ENCODE measurements at regions of chr11 and their contacts with region 1.

Region 1: DNA sequence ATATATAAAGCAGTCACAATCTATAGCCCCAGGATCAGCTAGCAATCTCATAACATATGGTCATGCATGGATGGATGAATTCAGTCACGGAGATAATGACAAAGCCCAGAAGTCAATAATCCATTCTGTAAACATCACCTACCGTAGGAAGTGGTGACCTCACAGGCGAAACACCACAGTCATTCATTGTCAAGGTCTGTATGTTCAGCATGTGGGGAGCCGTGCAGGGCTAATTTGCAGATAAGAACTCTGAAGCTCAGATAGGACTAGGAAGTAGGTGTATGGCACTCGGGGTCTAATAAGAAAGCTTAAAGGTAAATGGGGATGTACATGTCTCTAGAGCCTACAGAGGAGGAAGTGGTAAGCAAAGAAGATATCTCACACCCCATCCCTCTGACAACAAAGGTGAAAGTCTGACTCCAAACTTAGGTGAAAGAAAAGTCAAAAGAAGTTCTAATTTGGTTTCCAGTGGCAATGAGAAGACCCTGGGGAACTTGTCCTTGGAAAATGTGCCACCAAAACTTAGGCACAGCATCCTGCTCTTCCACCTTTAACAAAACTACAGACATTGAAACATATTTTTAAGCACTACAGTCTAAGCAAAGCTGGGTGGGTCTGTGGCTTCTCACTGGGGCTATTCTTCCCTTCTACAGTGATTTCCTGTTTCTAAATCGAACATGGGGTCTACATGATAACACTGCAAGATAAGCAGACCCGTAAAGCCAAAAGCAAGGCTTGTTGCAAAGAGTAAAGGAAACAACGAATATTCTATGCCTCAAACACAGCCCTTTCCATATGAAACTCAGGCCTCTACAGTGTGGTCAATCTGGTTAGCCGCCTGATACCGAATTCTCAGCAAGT is 5.2 kb downstream of the CRTAM start:
- DNase-seq: peak; percentile 31 to 92 (median 61)
- ATAC-seq: peak; percentile 82
- H3K4me3 ChIP-seq: peak overlapping the region; percentile 14 to 38
- H3K4me3 Mint-ChIP-seq: peak overlapping the region; percentile 59
- H3K27ac ChIP-seq: peak overlapping the region; percentile 56 to 84
- H3K27ac Mint-ChIP-seq: peak overlapping the region; percentile 94
- H3K4me1 ChIP-seq: peaks cover 75% of the 10 kb centered on the region
- H3K4me1 Mint-ChIP-seq: peaks cover 86% of the 10 kb centered on the region
- H3K27me3 ChIP-seq: no peaks in the 10 kb centered on the region
- H3K27me3 Mint-ChIP-seq: no peaks in the 10 kb centered on the region
- CTCF ChIP-seq: no peak

Region 2: DNA sequence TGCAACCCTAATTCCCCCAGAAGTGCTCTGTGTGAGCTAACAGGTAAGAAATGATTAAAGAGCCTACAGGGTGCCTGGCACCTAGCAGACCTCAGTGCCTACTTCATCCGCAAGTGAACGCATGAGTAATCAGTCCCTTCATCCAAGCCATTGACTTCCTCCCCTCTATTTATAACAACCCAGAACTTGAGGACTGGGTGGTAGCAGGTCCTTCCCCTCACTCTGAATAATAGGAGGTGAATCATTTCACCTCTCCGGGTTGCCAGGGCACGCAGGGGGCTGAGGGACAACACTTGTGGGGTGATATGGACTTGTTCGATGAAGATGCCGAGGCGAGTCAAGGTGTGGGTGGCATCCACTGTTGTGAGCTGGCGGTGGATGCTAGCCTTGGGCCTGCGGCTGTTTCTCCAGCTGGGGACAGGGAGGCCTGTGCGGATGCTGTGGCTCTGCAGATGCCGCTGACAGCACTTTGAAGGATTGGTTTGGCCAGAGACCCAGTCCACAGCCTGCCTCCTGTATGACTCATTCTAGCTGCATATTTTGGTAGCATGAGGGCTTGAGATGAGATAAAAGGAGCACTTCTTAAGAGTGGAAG is 1379.1 kb before region 1 on chr11:
- CTCF ChIA-PET with region 1: no interaction called
- POLR2A ChIA-PET with region 1: no interaction called
- intact Hi-C with region 1: loop called in 1 of 2 experiments (anchors 10 kb)
- DNase-seq: peak in 8 of 9 experiments; percentile 60 to 85 (median 80)
- ATAC-seq: peak; percentile 71
- H3K4me3 ChIP-seq: peak overlapping the region; percentile 4 to 5
- H3K4me3 Mint-ChIP-seq: peak overlapping the region; percentile 59
- H3K27ac ChIP-seq: peak overlapping the region; percentile 35 to 68
- H3K27ac Mint-ChIP-seq: peak overlapping the region; percentile 97
- H3K4me1 ChIP-seq: peaks cover 99% of the 10 kb centered on the region
- H3K4me1 Mint-ChIP-seq: peaks cover 95% of the 10 kb centered on the region
- H3K27me3 ChIP-seq: no peaks in the 10 kb centered on the region
- H3K27me3 Mint-ChIP-seq: no peaks in the 10 kb centered on the region
- CTCF ChIP-seq: no peak

Region 3: DNA sequence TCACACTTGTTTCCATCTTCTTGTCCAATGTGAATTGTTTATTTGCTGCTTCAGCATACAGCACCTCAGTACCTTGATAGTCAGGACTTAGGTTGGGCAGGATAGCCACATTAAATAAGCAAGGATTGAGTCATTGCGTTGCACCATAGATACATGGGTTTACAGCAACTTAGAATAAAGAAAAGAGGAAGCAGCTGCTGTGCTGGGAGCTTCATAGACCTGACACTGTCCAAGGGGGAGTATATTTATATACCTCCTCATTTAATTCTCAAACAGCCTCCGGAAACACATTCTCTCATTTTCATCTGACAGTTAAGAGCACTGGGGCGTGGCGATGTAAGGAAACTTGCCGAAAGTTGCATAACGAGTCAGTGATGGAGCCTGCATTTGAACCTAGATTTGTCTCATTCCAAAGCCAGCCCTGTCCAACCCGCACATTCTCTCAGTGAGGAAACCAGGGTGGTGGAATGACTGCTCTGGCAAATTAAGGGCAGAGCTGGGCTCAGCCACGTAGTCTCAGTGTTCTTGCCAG is 145.8 kb before region 1 on chr11:
- CTCF ChIA-PET with region 1: no interaction called
- POLR2A ChIA-PET with region 1: no interaction called
- intact Hi-C with region 1: loop called in 1 of 2 experiments (anchors 5 kb)
- DNase-seq: peak in 7 of 9 experiments; percentile 14 to 72 (median 60)
- ATAC-seq: peak; percentile 81
- H3K4me3 ChIP-seq: peak overlapping the region; percentile 4 to 25
- H3K4me3 Mint-ChIP-seq: peak overlapping the region; percentile 66
- H3K27ac ChIP-seq: peak overlapping the region; percentile 57 to 64
- H3K27ac Mint-ChIP-seq: peak overlapping the region; percentile 94
- H3K4me1 ChIP-seq: peaks cover 80% of the 10 kb centered on the region
- H3K4me1 Mint-ChIP-seq: peaks cover 91% of the 10 kb centered on the region
- H3K27me3 ChIP-seq: no peaks in the 10 kb centered on the region
- H3K27me3 Mint-ChIP-seq: no peaks in the 10 kb centered on the region
- CTCF ChIP-seq: no peak

Region 4: GRCh38 chr11:122814401-122814800 is 29.1 kb before region 1 on chr11:
- CTCF ChIA-PET with region 1: interaction called, 16 read pairs
- POLR2A ChIA-PET with region 1: interaction called, 3 read pairs
- intact Hi-C with region 1: no loop called
- DNase-seq: peak in 3 of 9 experiments; percentile 10 to 57 (median 44)
- ATAC-seq: no peak
- H3K4me3 ChIP-seq: no peak overlapping the region
- H3K4me3 Mint-ChIP-seq: no peak overlapping the region
- H3K27ac ChIP-seq: no peak overlapping the region
- H3K27ac Mint-ChIP-seq: no peak overlapping the region
- H3K4me1 ChIP-seq: peaks cover 27% of the 10 kb centered on the region
- H3K4me1 Mint-ChIP-seq: peaks cover 49% of the 10 kb centered on the region
- H3K27me3 ChIP-seq: no peaks in the 10 kb centered on the region
- H3K27me3 Mint-ChIP-seq: no peaks in the 10 kb centered on the region
- CTCF ChIP-seq: peak; percentile 25

Region 5: GRCh38 chr11:122822241-122822640 is 21.3 kb before region 1 on chr11:
- CTCF ChIA-PET with region 1: interaction called, 9 read pairs
- POLR2A ChIA-PET with region 1: interaction called, 17 read pairs
- intact Hi-C with region 1: no loop called
- DNase-seq: no peak
- ATAC-seq: no peak
- H3K4me3 ChIP-seq: no peak overlapping the region
- H3K4me3 Mint-ChIP-seq: no peak overlapping the region
- H3K27ac ChIP-seq: no peak overlapping the region
- H3K27ac Mint-ChIP-seq: no peak overlapping the region
- H3K4me1 ChIP-seq: peaks cover 11% of the 10 kb centered on the region
- H3K4me1 Mint-ChIP-seq: peaks cover 18% of the 10 kb centered on the region
- H3K27me3 ChIP-seq: no peaks in the 10 kb centered on the region
- H3K27me3 Mint-ChIP-seq: no peaks in the 10 kb centered on the region
- CTCF ChIP-seq: no peak

Region 6: DNA sequence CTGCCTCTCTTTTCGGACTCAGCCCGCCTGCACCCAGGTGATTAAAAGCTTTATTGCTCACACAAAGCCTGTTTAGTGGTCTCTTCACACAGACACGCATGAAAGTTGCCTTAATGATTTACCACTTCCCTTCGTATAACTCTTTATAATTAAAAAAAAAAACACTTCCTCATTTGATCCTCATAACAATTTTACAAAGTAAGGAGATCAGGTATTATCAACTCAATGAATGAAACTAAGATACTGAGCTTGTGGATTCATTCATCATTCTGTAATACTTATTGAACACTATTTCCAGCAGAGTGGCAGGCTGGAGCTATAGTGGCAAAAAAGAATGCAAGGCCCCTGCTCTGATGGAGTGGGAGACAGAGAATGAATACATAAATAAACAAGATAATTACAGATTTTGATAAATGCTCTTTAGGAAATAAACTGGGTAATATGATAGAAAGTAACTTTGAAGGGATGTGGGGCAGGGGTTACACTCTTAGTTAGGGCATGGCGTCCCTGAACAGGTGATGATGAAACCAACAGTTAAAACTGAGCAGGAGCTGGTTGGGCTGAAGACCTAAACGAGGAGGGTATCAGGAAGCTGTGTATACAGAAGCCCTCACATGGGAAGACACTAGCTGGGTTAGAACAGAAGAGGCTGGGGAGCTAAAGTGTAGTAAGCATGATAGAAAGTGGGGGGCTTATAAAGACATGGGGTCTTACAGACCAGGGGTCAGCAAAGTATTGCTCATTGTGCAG is 10.6 kb before region 1 on chr11:
- CTCF ChIA-PET with region 1: interaction called, 22 read pairs
- POLR2A ChIA-PET with region 1: interaction called, 25 read pairs
- intact Hi-C with region 1: no loop called
- DNase-seq: peak in 1 of 9 experiments; percentile 44
- ATAC-seq: peak; percentile 46
- H3K4me3 ChIP-seq: no peak overlapping the region
- H3K4me3 Mint-ChIP-seq: peak overlapping the region; percentile 12
- H3K27ac ChIP-seq: peak overlapping the region; percentile 7 to 42
- H3K27ac Mint-ChIP-seq: peak overlapping the region; percentile 70
- H3K4me1 ChIP-seq: peaks cover 15% of the 10 kb centered on the region
- H3K4me1 Mint-ChIP-seq: peaks cover 43% of the 10 kb centered on the region
- H3K27me3 ChIP-seq: no peaks in the 10 kb centered on the region
- H3K27me3 Mint-ChIP-seq: no peaks in the 10 kb centered on the region
- CTCF ChIP-seq: no peak

Region 7: GRCh38 chr11:122872051-122872450 is 28.5 kb after region 1 on chr11:
- CTCF ChIA-PET with region 1: no interaction called
- POLR2A ChIA-PET with region 1: no interaction called
- intact Hi-C with region 1: no loop called
- DNase-seq: no peak
- ATAC-seq: no peak
- H3K4me3 ChIP-seq: no peak overlapping the region
- H3K4me3 Mint-ChIP-seq: no peak overlapping the region
- H3K27ac ChIP-seq: no peak overlapping the region
- H3K27ac Mint-ChIP-seq: peak overlapping the region; percentile 79
- H3K4me1 ChIP-seq: no peaks in the 10 kb centered on the region
- H3K4me1 Mint-ChIP-seq: no peaks in the 10 kb centered on the region
- H3K27me3 ChIP-seq: no peaks in the 10 kb centered on the region
- H3K27me3 Mint-ChIP-seq: no peaks in the 10 kb centered on the region
- CTCF ChIP-seq: no peak

Region 8: DNA sequence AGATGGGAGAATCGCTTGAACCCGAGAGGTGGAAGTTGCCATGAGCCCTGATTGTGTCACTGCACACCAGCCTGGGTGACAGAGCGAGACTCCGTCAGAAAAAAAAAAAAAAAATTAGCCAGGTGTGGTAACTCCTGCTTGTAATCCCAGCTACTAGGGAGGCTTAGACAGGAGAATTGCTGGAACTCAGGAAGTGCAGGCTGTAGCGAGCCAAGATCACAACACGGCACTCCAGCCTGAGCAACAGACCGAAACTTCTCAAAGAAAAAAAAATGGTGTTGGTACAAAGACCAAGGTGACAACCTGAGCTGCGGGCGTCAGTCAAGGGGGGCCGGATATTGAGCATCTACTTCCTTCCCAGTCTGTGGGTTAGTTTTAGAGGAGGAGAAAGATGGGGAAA is 266.8 kb after region 1 on chr11:
- CTCF ChIA-PET with region 1: no interaction called
- POLR2A ChIA-PET with region 1: no interaction called
- intact Hi-C with region 1: no loop called
- DNase-seq: peak in 2 of 9 experiments; percentile 22 to 41
- ATAC-seq: no peak
- H3K4me3 ChIP-seq: no peak overlapping the region
- H3K4me3 Mint-ChIP-seq: peak overlapping the region; percentile 62
- H3K27ac ChIP-seq: no peak overlapping the region
- H3K27ac Mint-ChIP-seq: peak overlapping the region; percentile 71
- H3K4me1 ChIP-seq: no peaks in the 10 kb centered on the region
- H3K4me1 Mint-ChIP-seq: peaks cover 4% of the 10 kb centered on the region
- H3K27me3 ChIP-seq: no peaks in the 10 kb centered on the region
- H3K27me3 Mint-ChIP-seq: no peaks in the 10 kb centered on the region
- CTCF ChIP-seq: no peak

Measured in CD8-positive, alpha-beta T cell (primary cell).